ENCODE measurements at regions of chr12 and their contacts with region 1.

Region 1: GRCh38 chr12:12562585-12563261 is at the start of gene DUSP16:
- DNase-seq: peak; percentile 81
- H3K4me3 ChIP-seq: peak within 1 kb of the TSS; percentile 88
- H3K27ac ChIP-seq: peak within 1 kb of the TSS; percentile 89
- H3K27me3 ChIP-seq: peaks cover 5% of the 10 kb centered on the region
- CTCF ChIP-seq: no peak
- polyA plus RNA-seq, gene DUSP16: 11.1 and 12.8 TPM in 2 replicates

Region 2: DNA sequence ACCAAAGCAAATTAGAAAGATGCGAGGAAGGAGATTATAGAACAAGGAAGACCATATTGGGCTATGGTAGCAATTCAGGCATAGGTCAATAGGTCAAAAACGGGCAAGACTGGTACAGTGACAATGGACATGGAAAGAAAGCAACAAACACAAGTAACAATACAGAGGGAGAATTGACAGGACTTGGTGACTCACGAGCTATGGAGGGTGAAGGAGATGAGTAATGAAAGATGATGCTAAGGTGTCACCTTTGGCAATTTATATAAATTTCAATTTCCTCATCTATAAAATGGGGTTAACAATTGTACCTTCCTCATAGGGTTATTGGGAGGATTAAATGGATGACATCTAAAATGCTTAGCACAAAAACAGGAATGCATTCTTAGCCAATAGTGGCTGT is 15.1 kb after region 1 on chr12:
- CTCF ChIA-PET with region 1: interaction called, 21 read pairs
- POLR2A ChIA-PET with region 1: no interaction called
- DNase-seq: no peak
- H3K4me3 ChIP-seq: no peak overlapping the region
- H3K27ac ChIP-seq: no peak overlapping the region
- H3K27me3 ChIP-seq: no peaks in the 10 kb centered on the region
- CTCF ChIP-seq: no peak

Measured in AG04450 (cell line).